CD4-positive, alpha-beta memory T cell (primary cell): ENCODE measurements at regions of chr22 and their contacts with region 1.

Region 1: DNA sequence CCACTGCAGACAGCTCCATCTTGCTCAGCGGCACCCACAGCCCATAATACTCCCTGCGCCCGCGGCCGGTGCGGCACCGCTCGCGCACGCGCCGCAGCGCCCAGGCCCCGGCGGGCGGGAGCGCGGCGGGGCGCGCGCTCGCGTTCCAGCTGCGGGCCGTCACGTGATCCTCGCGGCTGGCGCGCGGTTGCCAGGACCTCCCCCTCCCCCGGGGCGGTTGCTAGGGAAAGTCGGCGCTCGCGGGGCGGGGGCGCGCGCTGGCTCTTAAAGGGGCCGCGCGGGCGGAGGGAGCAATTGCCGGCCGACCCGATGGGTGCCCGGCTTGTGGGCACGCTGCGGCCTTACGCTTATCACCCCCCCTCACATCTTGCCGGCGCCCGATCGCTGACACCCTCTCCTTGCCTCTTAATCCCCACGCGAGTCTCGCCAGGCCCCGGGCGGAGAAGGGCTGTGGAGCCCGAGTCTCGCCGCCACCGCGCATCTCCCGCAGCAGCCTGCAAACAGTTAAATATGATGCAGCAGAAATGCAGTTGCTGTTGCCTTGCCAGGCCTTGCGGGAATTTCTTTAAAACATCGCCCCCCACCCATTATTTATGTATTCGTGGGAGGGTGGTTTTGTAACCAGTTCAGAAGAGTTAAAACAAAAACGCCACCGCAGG is at the start of gene CBX6:
- DNase-seq: peak; percentile 91 to 96 (median 94)
- H3K4me3 ChIP-seq: peak within 1 kb of the TSS; percentile 71 to 72
- H3K4me3 Mint-ChIP-seq: peak within 1 kb of the TSS; percentile 93 to 96 (median 94)
- H3K27ac ChIP-seq: peak within 1 kb of the TSS; percentile 76
- H3K27ac Mint-ChIP-seq: peak within 1 kb of the TSS; percentile 90 to 97 (median 94)
- H3K4me1 ChIP-seq: peaks cover 53% of the 10 kb centered on the region
- H3K4me1 Mint-ChIP-seq: peaks cover 34 to 62% (median 45%) of the 10 kb centered on the region in 4 donors
- H3K27me3 ChIP-seq: no peaks in the 10 kb centered on the region
- H3K27me3 Mint-ChIP-seq: no peaks in the 10 kb centered on the region
- total RNA-seq, gene CBX6: 85.0 to 88.0 TPM

Region 2: DNA sequence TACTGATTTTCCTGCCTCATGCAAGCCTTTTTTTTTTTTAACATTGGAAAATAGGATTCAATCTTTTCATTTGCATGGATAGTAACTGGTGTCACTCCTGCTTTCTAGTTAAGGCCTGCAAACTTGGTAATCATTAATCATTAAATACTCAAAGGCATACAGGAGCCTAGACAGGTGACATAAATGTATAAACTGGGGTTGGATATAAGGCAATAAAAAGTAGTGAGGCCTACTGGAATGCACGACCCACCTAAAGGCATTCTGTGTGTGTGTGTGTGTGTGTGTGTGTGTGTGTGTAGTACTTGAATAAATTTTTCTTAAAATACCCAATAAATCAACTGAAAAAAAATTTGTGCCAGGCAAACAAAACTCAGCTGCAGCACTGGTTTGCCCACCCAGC is 182.7 kb before region 1 on chr22:
- CTCF ChIA-PET with region 1: no interaction called
- POLR2A ChIA-PET with region 1: no interaction called
- intact Hi-C with region 1: no loop called
- DNase-seq: no peak
- H3K4me3 ChIP-seq: no peak overlapping the region
- H3K4me3 Mint-ChIP-seq: no peak overlapping the region
- H3K27ac ChIP-seq: no peak overlapping the region
- H3K27ac Mint-ChIP-seq: peak overlapping the region in 1 of 7 donors; percentile 22
- H3K4me1 ChIP-seq: no peaks in the 10 kb centered on the region
- H3K4me1 Mint-ChIP-seq: peaks cover 11 to 26% (median 18%) of the 10 kb centered on the region in 4 donors
- H3K27me3 ChIP-seq: no peaks in the 10 kb centered on the region
- H3K27me3 Mint-ChIP-seq: no peaks in the 10 kb centered on the region

Region 3: DNA sequence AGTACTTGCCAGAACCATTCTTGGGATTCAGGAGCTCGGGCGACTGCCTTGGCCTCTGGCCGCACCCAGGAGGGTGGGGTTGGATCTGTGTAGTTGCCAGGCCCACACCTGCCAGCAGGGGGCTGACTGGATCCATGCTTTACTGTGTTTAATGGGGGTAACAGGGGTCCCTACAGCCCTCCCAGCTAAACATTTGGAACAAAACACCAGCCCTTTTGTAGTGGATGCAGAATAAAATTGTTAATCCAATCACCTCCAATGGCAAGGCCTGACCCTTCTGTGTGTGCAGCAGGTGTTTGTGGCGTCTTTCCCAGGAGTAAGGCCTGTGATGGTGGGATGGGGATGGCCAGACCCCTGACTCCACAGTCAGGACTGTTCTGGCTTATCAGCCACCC is 139.0 kb before region 1 on chr22:
- CTCF ChIA-PET with region 1: interaction called, 9 read pairs
- POLR2A ChIA-PET with region 1: interaction called, 27 read pairs
- intact Hi-C with region 1: no loop called
- DNase-seq: peak in 3 of 5 donors; percentile 41 to 51 (median 41)
- H3K4me3 ChIP-seq: no peak overlapping the region
- H3K4me3 Mint-ChIP-seq: peak overlapping the region in 2 of 8 donors; percentile 4 to 12
- H3K27ac ChIP-seq: peak overlapping the region; percentile 30
- H3K27ac Mint-ChIP-seq: peak overlapping the region; percentile 49 to 88 (median 84)
- H3K4me1 ChIP-seq: peaks cover 39% of the 10 kb centered on the region
- H3K4me1 Mint-ChIP-seq: peaks cover 18 to 60% (median 33%) of the 10 kb centered on the region in 4 donors
- H3K27me3 ChIP-seq: no peaks in the 10 kb centered on the region
- H3K27me3 Mint-ChIP-seq: no peaks in the 10 kb centered on the region

Region 4: DNA sequence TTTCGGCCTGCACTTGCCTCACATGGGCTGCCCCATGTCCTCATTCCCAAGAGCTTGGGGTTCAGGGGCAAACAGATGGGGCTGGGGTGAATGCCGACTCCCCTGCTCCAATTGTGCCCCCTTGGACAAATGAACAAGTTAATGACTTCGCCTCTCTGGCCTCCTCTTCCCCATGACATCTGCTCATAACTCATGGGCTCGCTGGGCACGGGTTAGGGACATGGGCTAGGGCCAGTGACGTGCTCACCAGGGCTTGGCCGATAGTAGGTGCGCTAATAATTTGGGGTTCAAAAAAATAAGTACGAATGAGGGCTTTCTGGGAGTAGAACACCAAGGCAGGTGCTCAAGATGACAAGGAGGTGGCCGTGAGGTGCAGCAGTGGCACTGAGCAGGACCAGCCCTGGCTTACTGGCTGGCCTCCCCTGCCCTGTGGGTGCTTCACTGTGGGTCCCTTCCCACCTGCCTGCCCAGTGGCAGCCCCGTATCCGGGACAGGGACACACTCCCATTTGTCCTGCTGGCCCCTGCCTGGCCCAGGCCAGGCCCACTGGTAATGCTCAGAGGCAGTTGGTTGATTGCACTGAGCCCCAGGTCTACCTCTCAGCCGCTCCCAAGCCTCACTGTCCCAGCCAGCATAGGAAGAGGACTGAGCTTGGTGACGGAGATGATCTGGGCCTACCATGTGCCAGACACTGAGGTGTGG is 12.6 kb before region 1 on chr22:
- CTCF ChIA-PET with region 1: interaction called, 11 read pairs
- POLR2A ChIA-PET with region 1: interaction called, 5 read pairs
- intact Hi-C with region 1: no loop called
- DNase-seq: no peak
- H3K4me3 ChIP-seq: no peak overlapping the region
- H3K4me3 Mint-ChIP-seq: no peak overlapping the region
- H3K27ac ChIP-seq: no peak overlapping the region
- H3K27ac Mint-ChIP-seq: no peak overlapping the region
- H3K4me1 ChIP-seq: no peaks in the 10 kb centered on the region
- H3K4me1 Mint-ChIP-seq: peaks cover 0 to 7% (median 5%) of the 10 kb centered on the region in 4 donors
- H3K27me3 ChIP-seq: no peaks in the 10 kb centered on the region
- H3K27me3 Mint-ChIP-seq: peaks cover 0 to 1% of the 10 kb centered on the region in 2 donors

Region 5: DNA sequence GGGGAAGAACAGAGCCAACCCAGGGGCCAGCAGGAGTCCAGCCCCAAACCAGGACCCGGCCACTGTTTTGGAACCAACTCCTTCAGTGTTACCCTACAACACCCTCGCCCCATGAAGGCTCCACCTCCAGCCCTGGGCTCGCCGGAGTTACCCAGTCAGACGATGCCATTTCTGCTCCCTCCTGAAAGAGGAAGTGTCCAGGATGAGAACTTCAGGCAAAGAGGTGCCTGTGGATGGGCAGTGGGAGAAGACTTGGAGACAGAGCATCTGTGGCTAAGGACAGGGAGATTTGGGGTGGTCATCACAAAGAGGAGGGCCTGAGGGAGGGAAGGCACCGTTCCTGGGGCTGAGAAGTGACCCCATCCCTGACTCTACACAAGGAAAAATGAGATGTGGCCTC is 123.8 kb after region 1 on chr22:
- CTCF ChIA-PET with region 1: interaction called, 168 read pairs
- POLR2A ChIA-PET with region 1: no interaction called
- intact Hi-C with region 1: no loop called
- DNase-seq: no peak
- H3K4me3 ChIP-seq: no peak overlapping the region
- H3K4me3 Mint-ChIP-seq: no peak overlapping the region
- H3K27ac ChIP-seq: no peak overlapping the region
- H3K27ac Mint-ChIP-seq: peak overlapping the region in 1 of 7 donors; percentile 77
- H3K4me1 ChIP-seq: no peaks in the 10 kb centered on the region
- H3K4me1 Mint-ChIP-seq: peaks cover 4 to 13% (median 5%) of the 10 kb centered on the region in 4 donors
- H3K27me3 ChIP-seq: no peaks in the 10 kb centered on the region
- H3K27me3 Mint-ChIP-seq: peaks cover 0 to 2% of the 10 kb centered on the region in 2 donors

Region 6: GRCh38 chr22:39117585-39118191 is 245.4 kb after region 1 on chr22:
- CTCF ChIA-PET with region 1: interaction called, 15 read pairs
- POLR2A ChIA-PET with region 1: interaction called, 4 read pairs
- intact Hi-C with region 1: loop called (anchors 1 kb)
- DNase-seq: peak; percentile 69 to 88 (median 73)
- H3K4me3 ChIP-seq: no peak overlapping the region
- H3K4me3 Mint-ChIP-seq: peak overlapping the region; percentile 53 to 82 (median 74)
- H3K27ac ChIP-seq: peak overlapping the region; percentile 52
- H3K27ac Mint-ChIP-seq: peak overlapping the region; percentile 77 to 92 (median 88)
- H3K4me1 ChIP-seq: peaks cover 35% of the 10 kb centered on the region
- H3K4me1 Mint-ChIP-seq: peaks cover 29 to 49% (median 34%) of the 10 kb centered on the region in 4 donors
- H3K27me3 ChIP-seq: no peaks in the 10 kb centered on the region
- H3K27me3 Mint-ChIP-seq: no peaks in the 10 kb centered on the region

Region 7: GRCh38 chr22:39236321-39237317 is 364.3 kb after region 1 on chr22:
- CTCF ChIA-PET with region 1: no interaction called
- POLR2A ChIA-PET with region 1: interaction called, 3 read pairs
- intact Hi-C with region 1: loop called (anchors 2 kb)
- DNase-seq: peak; percentile 61 to 77 (median 65)
- H3K4me3 ChIP-seq: peak overlapping the region; percentile 12 to 22
- H3K4me3 Mint-ChIP-seq: peak overlapping the region; percentile 55 to 93 (median 82)
- H3K27ac ChIP-seq: no peak overlapping the region
- H3K27ac Mint-ChIP-seq: peak overlapping the region; percentile 50 to 99 (median 81)
- H3K4me1 ChIP-seq: peaks cover 71% of the 10 kb centered on the region
- H3K4me1 Mint-ChIP-seq: peaks cover 37 to 75% (median 55%) of the 10 kb centered on the region in 4 donors
- H3K27me3 ChIP-seq: no peaks in the 10 kb centered on the region
- H3K27me3 Mint-ChIP-seq: peaks cover 5 to 9% of the 10 kb centered on the region in 2 donors

Region 8: GRCh38 chr22:39364714-39365491 is 492.6 kb after region 1 on chr22:
- CTCF ChIA-PET with region 1: no interaction called
- POLR2A ChIA-PET with region 1: no interaction called
- intact Hi-C with region 1: no loop called
- DNase-seq: no peak
- H3K4me3 ChIP-seq: no peak overlapping the region
- H3K4me3 Mint-ChIP-seq: no peak overlapping the region
- H3K27ac ChIP-seq: no peak overlapping the region
- H3K27ac Mint-ChIP-seq: no peak overlapping the region
- H3K4me1 ChIP-seq: no peaks in the 10 kb centered on the region
- H3K4me1 Mint-ChIP-seq: peaks cover 0 to 3% (median under 1%) of the 10 kb centered on the region in 4 donors
- H3K27me3 ChIP-seq: no peaks in the 10 kb centered on the region
- H3K27me3 Mint-ChIP-seq: no peaks in the 10 kb centered on the region